CD14-positive monocyte (primary cell): ENCODE measurements at regions of chr14 and their contacts with region 1.

Region 1: GRCh38 chr14:75002392-75003249 is at the start of gene EIF2B2:
- DNase-seq: peak; percentile 90 to 94 (median 90)
- H3K4me3 ChIP-seq: peak within 1 kb of the TSS; percentile 63 to 96 (median 87)
- H3K4me3 Mint-ChIP-seq: peak within 1 kb of the TSS; percentile 98 to 99
- H3K27ac ChIP-seq: peak within 1 kb of the TSS; percentile 68 to 89
- H3K27ac Mint-ChIP-seq: peak within 1 kb of the TSS; percentile 93 to 99 (median 97)
- H3K4me1 ChIP-seq: peaks cover 18 to 21% of the 10 kb centered on the region in 2 donors
- H3K4me1 Mint-ChIP-seq: peaks cover 27% of the 10 kb centered on the region
- H3K27me3 ChIP-seq: no peaks in the 10 kb centered on the region
- H3K27me3 Mint-ChIP-seq: peaks cover 0 to 3% (median 2%) of the 10 kb centered on the region in 3 donors
- CTCF ChIP-seq: peak; percentile 22
- polyA plus RNA-seq, gene EIF2B2: 20.8 to 26.3 (median 23.9) TPM

Region 2: DNA sequence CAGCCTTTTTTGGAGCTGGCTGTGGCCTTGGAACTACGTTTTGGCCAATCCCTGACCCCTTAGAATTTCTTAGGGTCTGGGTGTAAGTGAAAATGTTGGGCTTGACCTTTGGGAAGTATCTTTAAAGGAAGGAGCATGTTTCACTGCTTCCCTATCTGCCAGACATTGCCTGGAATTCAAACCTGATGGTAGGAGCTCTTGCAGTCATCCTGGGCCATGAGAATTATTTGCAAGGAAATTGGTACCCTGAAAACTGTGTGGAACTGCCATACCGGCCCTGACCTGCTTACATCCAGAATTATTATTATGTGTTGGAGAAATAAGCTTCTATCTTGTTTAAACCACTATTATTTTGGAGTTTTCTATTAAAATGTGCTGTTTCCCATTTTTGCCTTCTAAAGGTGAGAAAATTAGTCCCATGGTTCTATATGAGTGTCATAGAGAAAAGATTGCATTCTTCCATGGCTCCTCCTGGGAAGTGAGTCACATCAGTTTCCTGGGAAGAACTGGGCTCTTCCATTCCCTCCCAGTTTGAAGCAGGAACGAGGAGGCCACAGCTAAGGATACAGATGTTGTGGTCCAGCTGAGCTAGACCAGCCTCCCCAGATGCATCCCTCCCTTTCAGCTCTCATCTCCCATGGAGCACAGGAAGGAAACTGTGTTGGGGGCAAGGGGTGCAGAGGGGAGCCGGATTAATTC is 37.7 kb before region 1 on chr14:
- intact Hi-C with region 1: loop called in 1 of 2 experiments (anchors 5 kb)
- DNase-seq: no peak
- H3K4me3 ChIP-seq: no peak overlapping the region
- H3K4me3 Mint-ChIP-seq: no peak overlapping the region
- H3K27ac ChIP-seq: no peak overlapping the region
- H3K27ac Mint-ChIP-seq: no peak overlapping the region
- H3K4me1 ChIP-seq: peaks cover 20 to 23% of the 10 kb centered on the region in 2 donors
- H3K4me1 Mint-ChIP-seq: peaks cover 25% of the 10 kb centered on the region
- H3K27me3 ChIP-seq: no peaks in the 10 kb centered on the region
- H3K27me3 Mint-ChIP-seq: peaks cover 4 to 8% (median 4%) of the 10 kb centered on the region in 3 donors
- CTCF ChIP-seq: no peak

Region 3: DNA sequence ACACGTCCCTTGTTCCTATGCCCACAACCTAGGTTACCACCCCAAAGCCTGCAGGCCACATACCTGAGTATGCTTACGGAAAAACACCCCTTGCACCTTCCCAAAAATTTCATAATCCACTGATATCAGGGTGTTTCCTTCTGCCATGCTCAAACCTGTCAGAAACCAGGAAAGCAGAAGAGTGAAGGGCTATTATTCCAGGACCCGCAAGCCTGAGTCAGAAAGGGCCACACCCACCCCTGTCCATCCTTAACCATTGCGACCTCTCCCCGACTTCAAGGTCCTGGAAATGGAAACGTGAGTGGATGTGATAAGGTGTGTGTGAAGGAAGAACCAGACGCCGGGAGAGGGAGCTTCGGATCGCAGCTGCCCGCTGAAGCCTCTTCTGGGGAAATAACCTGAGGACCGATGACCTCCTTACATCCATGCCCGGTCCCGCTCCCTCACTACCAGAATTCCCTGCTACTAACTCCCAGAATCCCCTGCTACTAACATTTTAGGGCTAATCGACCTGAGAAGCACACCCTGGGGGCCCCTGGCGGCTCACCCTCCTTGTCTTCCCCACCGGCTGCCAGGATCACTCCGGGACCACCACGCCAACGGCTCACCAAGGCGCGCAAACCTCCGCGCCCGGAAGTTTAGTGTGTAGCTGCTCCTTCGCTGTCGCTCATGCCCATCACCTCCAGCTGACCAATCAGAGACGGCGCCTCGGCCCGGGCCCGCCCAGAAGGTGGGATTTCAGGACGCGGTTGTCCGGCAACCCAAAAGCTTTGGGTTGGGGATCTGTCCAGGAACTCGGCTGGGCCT is 61.0 kb after region 1 on chr14 and contains the start of gene ACYP1:
- intact Hi-C with region 1: loop called in 1 of 2 experiments (anchors 10 kb)
- DNase-seq: peak; percentile 81 to 86 (median 84)
- H3K4me3 ChIP-seq: peak within 1 kb of the TSS; percentile 75 to 84 (median 84)
- H3K4me3 Mint-ChIP-seq: peak within 1 kb of the TSS; percentile 99
- H3K27ac ChIP-seq: peak within 1 kb of the TSS; percentile 1 to 76
- H3K27ac Mint-ChIP-seq: peak within 1 kb of the TSS; percentile 83 to 96 (median 93)
- H3K4me1 ChIP-seq: peaks cover 14 to 32% of the 10 kb centered on the region in 2 donors
- H3K4me1 Mint-ChIP-seq: peaks cover 16% of the 10 kb centered on the region
- H3K27me3 ChIP-seq: no peaks in the 10 kb centered on the region
- H3K27me3 Mint-ChIP-seq: no peaks in the 10 kb centered on the region
- CTCF ChIP-seq: no peak
- polyA plus RNA-seq, gene ACYP1: 2.8 to 11.8 (median 4.3) TPM

Region 4: DNA sequence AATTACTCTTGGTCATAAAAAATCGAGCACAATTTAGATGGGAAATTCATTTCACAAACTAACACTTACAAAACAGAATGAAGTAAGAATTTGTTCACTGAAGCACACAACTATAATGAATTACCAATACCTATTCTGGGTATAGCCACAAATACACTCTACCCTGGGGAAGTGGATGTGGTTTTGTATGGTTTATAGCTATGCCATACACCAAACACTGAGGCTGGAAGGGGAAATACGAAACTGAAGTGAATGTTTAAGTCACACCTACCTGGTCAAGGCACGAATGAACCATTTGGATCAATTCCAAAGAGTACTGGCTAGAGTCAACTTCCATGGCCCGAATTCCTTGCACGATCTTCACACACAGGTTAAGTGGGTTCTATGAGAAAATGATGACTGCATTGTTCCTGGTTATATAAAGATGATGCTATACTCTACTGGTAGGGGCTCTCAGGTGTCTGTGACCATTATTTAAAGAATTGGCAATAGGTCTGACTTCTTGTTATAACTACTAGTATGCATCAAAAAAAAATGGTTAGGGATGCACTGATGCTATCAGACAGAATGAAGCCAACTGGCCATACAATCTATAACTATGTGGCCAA is 111.4 kb after region 1 on chr14:
- intact Hi-C with region 1: no loop called
- DNase-seq: no peak
- H3K4me3 ChIP-seq: no peak overlapping the region
- H3K4me3 Mint-ChIP-seq: no peak overlapping the region
- H3K27ac ChIP-seq: no peak overlapping the region
- H3K27ac Mint-ChIP-seq: no peak overlapping the region
- H3K4me1 ChIP-seq: no peaks in the 10 kb centered on the region
- H3K4me1 Mint-ChIP-seq: peaks cover 2% of the 10 kb centered on the region
- H3K27me3 ChIP-seq: no peaks in the 10 kb centered on the region
- H3K27me3 Mint-ChIP-seq: no peaks in the 10 kb centered on the region
- CTCF ChIP-seq: no peak